ENCODE measurements at regions of chrX and their contacts with region 1.

Region 1: GRCh38 chrX:10014462-10015356 is 47.6 kb downstream of the CLDN34 start:
- DNase-seq: peak; percentile 65 to 75
- ATAC-seq: peak; percentile 84 to 87
- H3K4me3 ChIP-seq: peak overlapping the region; percentile 45 to 78 (median 68)
- H3K27ac ChIP-seq: peak overlapping the region; percentile 81 to 86 (median 84)
- H3K4me1 ChIP-seq: no peaks in the 10 kb centered on the region
- H3K27me3 ChIP-seq: no peaks in the 10 kb centered on the region
- CTCF ChIP-seq: no peak
- POLR2A ChIP-seq: peak; percentile 63 to 68

Region 2: GRCh38 chrX:10052906-10053625 is 38.4 kb after region 1 on chrX:
- in situ Hi-C with region 1: no loop called
- intact Hi-C with region 1: loop called (anchors 5 kb)
- DNase-seq: peak; percentile 14 to 37
- ATAC-seq: peak; percentile 74 to 87
- H3K4me3 ChIP-seq: no peak overlapping the region
- H3K27ac ChIP-seq: peak overlapping the region in 3 of 4 donors; percentile 26 to 55 (median 52)
- H3K4me1 ChIP-seq: peaks cover 28 to 33% of the 10 kb centered on the region in 2 donors
- H3K27me3 ChIP-seq: no peaks in the 10 kb centered on the region
- CTCF ChIP-seq: no peak
- POLR2A ChIP-seq: no peak

Region 3: GRCh38 chrX:10083809-10084208 is 69.1 kb after region 1 on chrX:
- in situ Hi-C with region 1: no loop called
- intact Hi-C with region 1: loop called (anchors 5 kb)
- DNase-seq: no peak
- ATAC-seq: no peak
- H3K4me3 ChIP-seq: peak overlapping the region in 1 of 4 donors; percentile 38
- H3K27ac ChIP-seq: peak overlapping the region; percentile 57 to 82 (median 74)
- H3K4me1 ChIP-seq: peaks cover 10 to 15% of the 10 kb centered on the region in 2 donors
- H3K27me3 ChIP-seq: no peaks in the 10 kb centered on the region
- CTCF ChIP-seq: no peak
- POLR2A ChIP-seq: no peak